ENCODE measurements at regions of chr1 and their contacts with region 1.

Region 1: GRCh38 chr1:225474986-225475820 is 47.4 kb upstream of the LBR start:
- DNase-seq: no peak
- H3K4me3 ChIP-seq: no peak overlapping the region
- H3K27me3 ChIP-seq: no peaks in the 10 kb centered on the region; the same call in 1 of the 2 replicates
- CTCF ChIP-seq: peak; percentile 90

Region 2: GRCh38 chr1:225460737-225461562 is 14.3 kb before region 1 on chr1:
- CTCF ChIA-PET with region 1: interaction called, 19 read pairs
- POLR2A ChIA-PET with region 1: no interaction called
- DNase-seq: no peak
- H3K4me3 ChIP-seq: no peak overlapping the region
- H3K27me3 ChIP-seq: peaks cover 3% of the 10 kb centered on the region; the same call in 1 of the 2 replicates
- CTCF ChIP-seq: no peak

Region 3: GRCh38 chr1:225777583-225778336 is 302.6 kb after region 1 on chr1 and contains the start of gene SRP9:
- CTCF ChIA-PET with region 1: interaction called, 231 read pairs
- POLR2A ChIA-PET with region 1: no interaction called
- DNase-seq: peak; percentile 88
- H3K4me3 ChIP-seq: peak within 1 kb of the TSS; percentile 87
- H3K27me3 ChIP-seq: no peaks in the 10 kb centered on the region
- CTCF ChIP-seq: peak; percentile 96
- polyA plus RNA-seq, gene SRP9: 250 and 272 TPM in 2 replicates

Region 4: DNA sequence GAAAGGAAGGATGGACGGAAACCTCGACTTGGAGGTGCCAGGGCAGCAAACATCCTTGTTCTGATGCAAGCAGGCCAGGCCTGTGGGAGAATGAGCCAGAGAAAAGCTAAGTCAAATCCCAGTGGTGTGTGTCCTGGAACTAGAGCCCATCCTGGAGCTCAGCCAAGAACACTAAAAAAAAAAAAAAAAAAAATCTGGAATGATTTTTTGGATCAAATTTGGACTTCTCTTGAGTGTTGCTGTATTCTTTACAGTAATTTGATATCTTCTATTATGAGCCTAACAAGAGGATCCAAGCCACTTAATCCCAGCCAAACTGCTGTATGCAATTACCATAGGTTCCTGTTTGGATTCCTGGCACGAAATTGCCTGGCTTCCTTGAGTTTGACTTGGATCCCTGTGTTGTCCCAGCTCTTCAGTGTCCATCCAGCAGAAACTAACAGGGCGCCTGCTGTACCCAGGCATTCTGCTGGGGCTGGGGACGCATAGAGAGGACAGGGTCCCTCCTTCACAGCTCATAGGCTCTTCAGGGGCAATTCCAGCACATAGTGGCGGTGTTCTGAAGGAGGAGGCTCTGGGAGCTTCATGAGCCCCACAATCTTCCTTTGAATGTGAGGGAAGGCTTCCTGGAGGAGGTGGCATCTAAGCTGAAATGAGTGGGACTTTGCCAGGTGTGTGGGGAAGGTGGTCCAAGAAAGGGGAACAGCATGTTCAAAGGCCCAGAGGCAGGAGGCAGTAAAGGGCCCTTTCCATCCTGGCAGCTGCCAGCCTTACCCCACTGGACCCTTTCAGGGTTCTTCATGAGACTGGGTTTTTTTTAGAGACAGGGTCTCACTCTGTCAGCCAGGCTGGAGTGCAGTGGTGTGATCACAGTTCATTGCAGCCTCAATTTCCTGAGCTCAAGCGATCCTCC is 359.5 kb after region 1 on chr1:
- CTCF ChIA-PET with region 1: interaction called, 12 read pairs
- POLR2A ChIA-PET with region 1: no interaction called
- DNase-seq: peak; percentile 39
- H3K4me3 ChIP-seq: no peak overlapping the region
- H3K27me3 ChIP-seq: no peaks in the 10 kb centered on the region
- CTCF ChIP-seq: no peak

Region 5: GRCh38 chr1:225911191-225912130 is 436.3 kb after region 1 on chr1:
- CTCF ChIA-PET with region 1: interaction called, 21 read pairs
- POLR2A ChIA-PET with region 1: no interaction called
- DNase-seq: no peak
- H3K4me3 ChIP-seq: no peak overlapping the region
- H3K27me3 ChIP-seq: no peaks in the 10 kb centered on the region
- CTCF ChIP-seq: peak; percentile 54

Region 6: DNA sequence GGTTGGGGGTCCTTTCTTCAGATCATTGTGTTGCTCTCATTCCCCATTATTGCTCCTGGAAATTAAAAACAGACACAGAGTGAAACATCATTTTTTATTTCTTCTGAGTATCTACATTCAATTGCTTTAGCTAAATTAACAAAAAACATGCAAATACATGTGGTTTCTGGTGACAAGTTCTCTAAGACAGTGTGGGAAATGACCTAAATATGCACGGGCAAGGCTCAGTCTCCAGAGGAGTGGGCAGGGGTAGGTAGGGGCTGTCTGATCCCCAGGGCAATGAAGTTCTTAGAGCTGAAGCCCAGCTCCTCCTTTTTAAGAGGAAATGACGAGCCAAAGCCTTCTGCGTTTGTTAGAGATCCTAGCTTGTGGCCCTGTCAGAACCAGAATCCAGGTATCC is 461.3 kb after region 1 on chr1:
- CTCF ChIA-PET with region 1: no interaction called
- POLR2A ChIA-PET with region 1: no interaction called
- DNase-seq: no peak
- H3K4me3 ChIP-seq: no peak overlapping the region
- H3K27me3 ChIP-seq: no peaks in the 10 kb centered on the region; the same call in 1 of the 2 replicates
- CTCF ChIP-seq: no peak

Region 7: DNA sequence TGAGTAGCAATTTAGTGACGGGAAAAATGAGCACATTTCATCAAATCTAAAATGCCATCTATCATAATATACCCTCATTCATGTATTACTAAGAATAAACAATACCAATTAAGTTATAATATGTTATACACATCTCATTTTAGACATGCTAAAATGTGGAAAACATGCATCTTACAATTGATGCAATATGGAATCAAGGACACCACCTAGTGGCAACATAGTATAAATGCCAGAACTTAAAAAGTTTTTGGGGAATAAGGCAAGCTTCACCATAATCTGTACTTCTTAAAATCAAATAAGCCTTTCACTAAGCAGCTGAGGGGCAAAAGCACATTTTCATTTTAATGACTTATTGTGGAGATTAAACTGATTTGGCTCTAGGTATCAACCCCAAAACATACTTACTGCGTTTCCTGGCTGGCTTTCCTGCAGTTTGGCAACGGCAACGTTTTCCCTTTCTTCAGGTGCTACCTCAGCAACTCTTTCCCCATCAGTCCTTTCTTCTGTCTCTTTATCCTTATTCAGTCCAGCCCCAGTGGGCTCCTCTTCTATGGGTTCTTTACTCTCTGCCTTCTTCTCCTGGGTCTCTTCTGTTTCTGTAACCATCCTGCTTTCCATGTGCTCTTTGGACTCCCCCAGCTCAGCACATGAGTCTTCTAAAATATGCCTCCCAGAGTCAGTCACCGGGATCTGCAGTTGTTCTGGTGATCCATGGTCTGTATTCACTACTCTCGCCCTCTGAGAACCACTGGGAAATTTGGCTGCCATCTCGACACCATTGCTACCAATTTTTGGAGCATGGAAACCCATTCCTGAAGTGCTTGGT is 512.5 kb after region 1 on chr1:
- CTCF ChIA-PET with region 1: interaction called, 41 read pairs
- POLR2A ChIA-PET with region 1: no interaction called
- DNase-seq: no peak
- H3K4me3 ChIP-seq: no peak overlapping the region
- H3K27me3 ChIP-seq: no peaks in the 10 kb centered on the region
- CTCF ChIP-seq: peak; percentile 68

Measured in BJ (cell line).